OCI-LY7 (cell line): ENCODE measurements at regions of chr11 and their contacts with region 1.

Region 1: DNA sequence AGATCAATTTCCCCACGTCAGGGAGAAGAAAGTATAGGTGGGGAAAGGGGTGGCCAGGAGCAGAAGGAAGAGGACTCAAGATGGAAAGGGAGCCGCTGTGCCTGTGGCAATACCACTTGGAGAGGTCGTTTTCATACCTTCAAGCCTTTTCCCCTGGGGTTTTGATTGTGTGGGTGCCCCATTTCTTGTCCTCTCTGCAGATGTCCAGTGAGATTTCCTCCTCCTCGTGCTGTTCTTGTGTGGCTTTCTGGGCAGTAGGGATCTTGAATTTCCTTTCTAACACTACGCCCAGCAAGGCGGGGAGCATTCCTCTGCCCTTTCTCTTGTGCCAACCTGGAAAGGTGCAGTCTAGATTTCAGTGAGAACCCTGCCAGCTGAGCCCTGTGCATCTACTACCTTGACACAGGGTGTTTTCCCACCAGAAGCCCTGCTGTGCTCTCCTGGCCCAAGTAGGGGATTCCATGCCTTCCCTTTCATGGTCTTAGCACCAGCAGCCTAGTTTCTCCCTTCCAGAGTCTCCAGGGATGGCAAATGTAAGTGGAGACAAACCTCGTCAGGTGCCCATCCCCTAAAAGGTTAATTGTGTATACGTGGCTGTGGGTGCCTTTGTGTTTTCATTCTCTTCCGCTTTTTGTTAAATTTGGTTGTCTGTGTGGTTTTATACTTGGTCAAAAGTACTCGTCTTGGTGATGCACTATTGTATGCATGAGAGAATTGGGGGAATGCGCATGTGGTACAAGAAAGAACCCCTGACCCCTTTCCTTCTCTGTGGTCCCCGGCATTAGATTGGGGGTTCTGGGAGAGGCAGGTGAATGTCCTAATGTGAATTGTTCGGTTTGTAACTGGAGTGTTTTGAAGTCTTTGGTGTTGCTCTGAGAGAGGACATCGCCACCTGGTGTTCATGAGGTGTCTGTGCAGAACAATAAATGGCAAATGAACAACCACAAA is 71.4 kb upstream of the MPEG1 start:
- DNase-seq: peak; percentile 87
- H3K4me3 ChIP-seq: peak overlapping the region; percentile 37
- H3K27ac ChIP-seq: peak overlapping the region; percentile 44
- H3K4me1 ChIP-seq: peaks cover 25% of the 10 kb centered on the region
- CTCF ChIP-seq: peak; percentile 95

Region 2: DNA sequence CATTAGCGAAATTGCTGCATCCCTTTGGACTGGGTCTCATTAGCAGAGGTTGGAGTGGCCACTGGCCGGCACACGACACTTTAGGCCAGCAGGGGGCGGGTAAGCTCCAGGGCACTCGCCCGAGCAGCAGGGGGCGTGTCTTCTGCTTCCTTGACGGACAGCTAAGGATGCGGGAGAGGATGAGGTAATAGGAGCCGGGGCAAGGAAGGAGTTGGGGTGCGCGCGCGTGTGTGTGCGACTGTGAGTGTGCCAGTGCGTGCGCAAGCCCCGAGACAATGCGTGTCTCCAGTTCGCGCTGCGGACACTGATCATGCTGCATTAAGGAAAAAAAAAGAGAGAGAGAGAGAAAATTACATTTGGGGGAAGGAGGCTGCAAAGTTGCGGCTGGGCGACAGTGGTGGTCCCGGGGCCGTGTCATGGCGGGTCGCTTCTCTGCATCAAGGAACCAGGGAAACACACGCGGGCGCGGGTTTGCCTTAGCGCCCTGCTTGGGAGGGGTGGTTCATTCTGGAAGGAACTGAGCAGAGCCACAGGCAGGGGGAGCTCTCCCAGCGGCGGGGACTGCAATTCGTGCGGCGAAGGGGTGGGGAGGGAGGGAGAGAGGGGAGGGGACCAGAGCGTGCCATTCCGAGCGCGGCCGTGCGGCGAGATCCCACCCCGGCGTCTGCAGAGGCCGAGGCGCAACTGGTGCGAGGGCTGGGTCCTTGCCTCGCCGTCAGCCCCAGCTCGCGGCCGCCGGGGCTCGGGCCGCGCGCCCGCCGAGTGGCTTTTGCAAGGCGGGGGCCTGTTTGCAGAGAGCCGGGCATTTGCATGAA is 112.4 kb before region 1 on chr11 and contains the start of gene DTX4:
- CTCF ChIA-PET with region 1: no interaction called
- POLR2A ChIA-PET with region 1: no interaction called
- intact Hi-C with region 1: loop called (anchors 1 kb)
- DNase-seq: peak; percentile 92
- H3K4me3 ChIP-seq: peak within 1 kb of the TSS; percentile 77
- H3K27ac ChIP-seq: peak within 1 kb of the TSS; percentile 31
- H3K4me1 ChIP-seq: peaks cover 11% of the 10 kb centered on the region
- CTCF ChIP-seq: peak; percentile 88
- total RNA-seq, gene DTX4: 0.70 and 1.4 TPM in 2 replicates

Region 3: DNA sequence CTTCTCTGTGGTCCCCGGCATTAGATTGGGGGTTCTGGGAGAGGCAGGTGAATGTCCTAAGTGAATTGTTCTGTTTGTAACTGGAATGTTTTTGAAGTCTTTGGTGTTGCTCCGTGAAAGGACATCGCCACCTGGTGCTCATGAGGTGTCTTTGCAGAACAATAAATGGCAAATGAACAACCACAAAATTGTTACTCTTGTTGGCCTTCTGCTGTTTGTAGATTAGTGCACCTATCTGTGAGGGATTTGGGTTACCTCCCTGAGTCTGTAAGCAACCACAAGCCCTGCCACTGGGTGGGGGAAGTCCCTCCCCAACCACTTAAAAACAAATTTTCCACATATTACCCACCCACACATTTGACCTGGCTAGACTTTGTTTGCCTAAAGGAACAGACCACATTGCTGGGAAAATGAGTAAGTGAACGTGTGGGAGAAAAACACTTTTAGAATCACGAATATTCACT is 76.1 kb before region 1 on chr11:
- CTCF ChIA-PET with region 1: no interaction called
- POLR2A ChIA-PET with region 1: no interaction called
- intact Hi-C with region 1: loop called (anchors 1 kb)
- DNase-seq: peak; percentile 68
- H3K4me3 ChIP-seq: no peak overlapping the region
- H3K27ac ChIP-seq: no peak overlapping the region
- H3K4me1 ChIP-seq: peaks cover 16% of the 10 kb centered on the region
- CTCF ChIP-seq: peak; percentile 89

Region 4: GRCh38 chr11:59216641-59217564 is 67.2 kb before region 1 on chr11:
- CTCF ChIA-PET with region 1: no interaction called
- POLR2A ChIA-PET with region 1: no interaction called
- intact Hi-C with region 1: loop called (anchors 2 kb)
- DNase-seq: peak; percentile 94
- H3K4me3 ChIP-seq: peak overlapping the region; percentile 37
- H3K27ac ChIP-seq: peak overlapping the region; percentile 58
- H3K4me1 ChIP-seq: peaks cover 44% of the 10 kb centered on the region
- CTCF ChIP-seq: no peak

Region 5: DNA sequence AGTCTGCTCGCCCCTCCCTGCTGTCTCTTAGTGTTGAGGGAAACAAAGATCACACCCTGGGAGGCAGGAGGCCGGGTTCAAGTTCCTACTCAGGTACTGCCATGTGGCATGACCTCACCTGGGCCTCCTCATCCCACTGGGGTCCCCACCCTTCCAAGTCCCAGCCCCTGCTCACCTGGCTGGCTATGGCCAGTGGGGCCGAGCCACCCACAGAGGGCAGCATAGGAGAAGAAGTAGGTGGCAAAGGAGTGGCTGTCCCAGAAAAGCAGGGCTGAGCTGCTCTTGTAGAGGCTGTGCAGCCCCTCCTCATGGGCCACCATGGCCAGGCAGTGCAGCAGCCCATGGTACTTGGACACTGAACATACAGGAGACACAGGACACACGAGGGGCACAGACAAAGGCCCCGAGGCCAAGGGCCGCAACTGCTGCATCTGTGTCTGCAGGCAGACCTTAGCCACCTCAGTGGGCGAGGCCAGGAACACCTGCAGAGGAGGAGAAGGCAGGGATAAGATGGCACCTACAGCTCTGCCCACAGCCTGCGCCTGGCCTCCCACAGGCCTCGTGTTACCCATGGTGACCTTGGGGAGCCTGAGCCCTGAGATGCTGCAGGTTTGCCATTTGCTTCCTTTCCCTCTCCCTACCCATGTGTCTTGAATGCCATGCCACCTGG is 20.7 kb before region 1 on chr11:
- CTCF ChIA-PET with region 1: interaction called, 5 read pairs
- POLR2A ChIA-PET with region 1: interaction called, 12 read pairs
- intact Hi-C with region 1: loop called (anchors 1 kb)
- DNase-seq: peak; percentile 84
- H3K4me3 ChIP-seq: no peak overlapping the region
- H3K27ac ChIP-seq: no peak overlapping the region
- H3K4me1 ChIP-seq: peaks cover 56% of the 10 kb centered on the region
- CTCF ChIP-seq: peak; percentile 92